AG04450 (cell line): ENCODE measurements at regions of chr10 and their contacts with region 1.

Region 1: GRCh38 chr10:16828114-16828568 is 10.9 kb upstream of the RSU1 start:
- DNase-seq: peak; percentile 57
- H3K4me3 ChIP-seq: no peak overlapping the region
- H3K27ac ChIP-seq: no peak overlapping the region
- H3K27me3 ChIP-seq: no peaks in the 10 kb centered on the region
- CTCF ChIP-seq: peak; percentile 60

Region 2: DNA sequence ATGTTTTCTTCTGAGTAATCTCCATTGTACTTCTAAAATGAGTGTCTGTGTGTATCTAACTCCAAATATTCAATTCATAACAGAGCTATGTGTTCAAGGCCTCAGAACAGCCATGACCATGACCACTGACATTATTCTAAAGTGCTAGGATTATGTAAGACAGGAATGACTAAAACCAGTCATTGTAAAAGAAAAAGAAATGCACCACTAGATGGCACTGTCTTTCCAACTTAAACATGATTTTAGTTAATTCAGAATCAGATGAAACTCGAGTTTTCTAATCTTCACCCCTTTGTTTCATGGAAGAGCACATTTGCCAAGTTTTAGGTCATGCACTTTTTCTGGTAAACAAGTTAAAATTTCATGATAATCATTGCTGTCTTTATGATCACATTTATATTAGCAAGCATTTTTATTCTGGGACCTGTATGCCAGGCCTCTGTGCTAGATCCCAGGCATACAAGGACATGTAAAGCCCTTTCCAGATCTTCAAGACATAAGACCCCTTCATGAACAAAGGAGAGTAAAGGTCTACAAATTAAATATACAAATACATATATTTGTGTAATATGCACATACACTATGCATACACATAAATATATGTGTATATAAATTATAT is 15.2 kb after region 1 on chr10:
- CTCF ChIA-PET with region 1: interaction called, 11 read pairs
- POLR2A ChIA-PET with region 1: no interaction called
- DNase-seq: peak; percentile 52
- H3K4me3 ChIP-seq: no peak overlapping the region
- H3K27ac ChIP-seq: no peak overlapping the region
- H3K27me3 ChIP-seq: no peaks in the 10 kb centered on the region
- CTCF ChIP-seq: peak; percentile 53

Region 3: DNA sequence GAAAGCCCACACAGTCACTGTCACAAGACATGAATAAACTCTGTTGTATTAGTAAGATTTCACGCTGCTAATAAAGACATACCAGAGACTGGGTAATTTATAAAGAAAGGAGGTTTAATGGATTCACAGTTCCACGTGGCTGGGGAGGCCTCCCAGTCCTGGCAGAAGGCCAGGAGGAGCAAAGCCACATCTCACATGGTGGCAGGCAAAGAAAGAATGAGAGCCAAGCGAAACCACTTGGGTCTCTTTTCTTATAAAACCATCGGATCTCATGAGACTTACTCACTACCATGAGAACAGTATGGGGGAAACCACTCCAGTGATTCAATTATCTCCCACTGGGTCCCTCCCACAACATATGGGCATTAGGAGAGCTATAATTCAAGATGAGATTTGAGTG is 516.1 kb after region 1 on chr10:
- CTCF ChIA-PET with region 1: no interaction called
- POLR2A ChIA-PET with region 1: no interaction called
- DNase-seq: no peak
- H3K4me3 ChIP-seq: no peak overlapping the region
- H3K27ac ChIP-seq: no peak overlapping the region
- H3K27me3 ChIP-seq: no peaks in the 10 kb centered on the region
- CTCF ChIP-seq: no peak

Region 4: DNA sequence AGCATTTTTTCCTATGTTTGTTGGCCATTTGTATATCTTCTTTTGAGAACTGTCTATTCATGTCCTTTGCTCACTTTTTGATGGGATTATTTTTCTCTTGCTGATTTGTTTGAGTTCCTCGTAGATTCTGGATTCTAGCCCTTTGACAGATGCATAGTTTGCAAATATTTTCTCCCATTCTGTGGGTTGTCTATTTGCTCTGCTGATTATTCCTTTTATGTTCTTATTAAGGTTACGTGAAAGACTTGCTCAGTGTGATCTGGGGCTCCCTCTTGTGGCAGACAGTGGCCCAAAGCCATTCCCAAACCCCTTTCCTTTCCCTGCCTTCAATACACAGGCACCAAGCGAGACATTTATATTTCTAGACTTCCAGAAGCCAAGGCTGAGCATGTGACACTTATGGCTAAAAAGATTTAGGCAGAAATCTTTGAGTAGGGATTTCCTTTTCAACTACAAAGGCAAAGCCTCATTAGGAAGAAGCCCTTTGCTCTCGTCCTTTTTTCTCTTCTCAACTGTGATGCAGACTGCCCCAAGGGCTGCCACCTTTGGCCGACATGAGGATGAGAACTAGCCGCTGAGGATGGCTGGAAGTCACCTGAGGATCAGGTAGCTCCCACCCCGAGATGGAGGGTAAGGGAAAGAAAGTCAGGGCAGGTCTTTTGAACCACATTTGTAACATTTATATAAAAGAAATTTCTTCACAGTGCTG is 602.7 kb after region 1 on chr10:
- CTCF ChIA-PET with region 1: interaction called, 14 read pairs
- POLR2A ChIA-PET with region 1: no interaction called
- DNase-seq: peak; percentile 61
- H3K4me3 ChIP-seq: no peak overlapping the region
- H3K27ac ChIP-seq: no peak overlapping the region
- H3K27me3 ChIP-seq: peaks cover 7% of the 10 kb centered on the region
- CTCF ChIP-seq: peak; percentile 95